ENCODE measurements at regions of chr12 and their contacts with region 1.

Region 1: GRCh38 chr12:6603095-6603567 is 4.0 kb downstream of the CHD4 start:
- DNase-seq: peak in 6 of 7 donors; percentile 46 to 72 (median 52)
- H3K4me3 ChIP-seq: peak overlapping the region in 1 of 4 donors; percentile 37
- H3K27ac ChIP-seq: peak overlapping the region in 3 of 5 donors; percentile 51 to 67 (median 59)
- H3K4me1 ChIP-seq: peaks cover 36 to 37% of the 10 kb centered on the region in 2 donors
- H3K27me3 ChIP-seq: no peaks in the 10 kb centered on the region
- CTCF ChIP-seq: no peak
- POLR2A ChIP-seq: no peak

Region 2: GRCh38 chr12:6563448-6564050 is 39.6 kb before region 1 on chr12:
- intact Hi-C with region 1: loop called (anchors 5 kb)
- DNase-seq: peak in 4 of 7 donors; percentile 57 to 78 (median 70)
- H3K4me3 ChIP-seq: no peak overlapping the region
- H3K27ac ChIP-seq: no peak overlapping the region
- H3K4me1 ChIP-seq: peaks cover 3 to 11% of the 10 kb centered on the region in 2 donors
- H3K27me3 ChIP-seq: no peaks in the 10 kb centered on the region
- CTCF ChIP-seq: peak; percentile 24 to 72 (median 57)
- POLR2A ChIP-seq: no peak

Measured in adrenal gland (tissue), 19 donors.